GM23248 (cell line): ENCODE measurements at regions of chr20 and their contacts with region 1.

Region 1: GRCh38 chr20:44460795-44461141 is 14.9 kb upstream of the TTPAL start:
- DNase-seq: peak; percentile 72
- H3K4me3 ChIP-seq: no peak overlapping the region
- H3K27ac ChIP-seq: no peak overlapping the region
- H3K4me1 ChIP-seq: no peaks in the 10 kb centered on the region
- H3K27me3 ChIP-seq: no peaks in the 10 kb centered on the region; the same call in 1 of the 2 replicates

Region 2: GRCh38 chr20:44109951-44110361 is 350.8 kb before region 1 on chr20:
- in situ Hi-C with region 1: loop called (anchors 10 kb)
- DNase-seq: no peak
- H3K4me3 ChIP-seq: no peak overlapping the region
- H3K27ac ChIP-seq: no peak overlapping the region
- H3K4me1 ChIP-seq: no peaks in the 10 kb centered on the region
- H3K27me3 ChIP-seq: no peaks in the 10 kb centered on the region

Region 3: DNA sequence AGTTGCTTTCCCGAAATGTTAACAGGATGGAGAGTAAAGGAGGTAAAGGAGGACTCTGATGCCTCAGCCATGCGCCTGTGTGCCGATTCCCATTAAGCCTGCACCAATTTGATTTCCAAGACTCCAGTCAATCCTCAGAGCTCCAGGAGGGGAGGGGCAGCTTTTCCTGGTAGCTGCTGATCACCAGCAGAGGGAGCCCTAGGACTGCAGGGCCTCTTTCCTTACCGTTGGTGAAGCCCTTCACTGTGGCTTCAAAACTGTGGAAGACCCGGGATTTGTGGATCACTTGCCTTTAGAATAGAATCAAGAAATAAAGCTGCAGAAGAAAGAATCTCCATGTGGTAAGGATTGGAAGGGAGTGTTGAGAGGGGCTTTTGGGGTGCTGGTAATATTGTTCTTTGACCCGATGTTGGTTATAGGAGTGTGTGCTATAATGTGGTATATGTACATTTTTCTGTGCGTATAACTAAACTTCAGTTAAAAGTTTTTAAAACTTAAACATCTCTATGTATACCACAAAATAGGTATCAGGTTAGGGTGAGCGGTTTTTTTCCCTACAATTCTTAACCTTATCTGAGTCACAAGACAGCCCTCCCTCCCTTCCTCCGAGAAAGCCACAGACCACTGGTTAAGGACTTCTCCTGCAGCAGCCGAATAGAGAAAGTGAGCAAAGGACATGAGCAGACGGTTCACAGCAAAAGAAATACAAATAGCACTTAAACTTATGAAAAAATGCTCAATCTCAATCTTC is 243.3 kb before region 1 on chr20:
- in situ Hi-C with region 1: loop called (anchors 5 kb)
- DNase-seq: peak; percentile 80
- H3K4me3 ChIP-seq: no peak overlapping the region
- H3K27ac ChIP-seq: no peak overlapping the region
- H3K4me1 ChIP-seq: no peaks in the 10 kb centered on the region
- H3K27me3 ChIP-seq: no peaks in the 10 kb centered on the region

Region 4: DNA sequence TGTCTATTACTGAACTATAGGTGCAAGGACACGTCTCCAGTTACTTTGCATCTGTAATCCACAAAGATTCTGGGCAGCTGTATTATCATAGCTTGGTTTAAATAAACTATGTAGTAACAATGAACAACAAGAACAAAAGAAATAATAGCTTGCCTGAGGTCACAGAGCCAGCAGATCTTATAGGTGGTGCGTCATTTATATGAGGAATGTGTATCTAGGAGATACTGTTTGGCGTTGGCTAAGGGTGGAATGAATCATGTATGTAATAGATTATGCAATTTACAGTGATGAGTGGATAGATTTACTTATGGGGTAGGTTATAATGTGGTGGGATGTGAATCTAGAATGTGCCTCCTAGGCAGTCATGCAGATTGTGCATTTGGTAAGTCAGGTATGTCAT is 62.5 kb before region 1 on chr20:
- in situ Hi-C with region 1: loop called (anchors 5 kb)
- DNase-seq: peak; percentile 91
- H3K4me3 ChIP-seq: no peak overlapping the region
- H3K27ac ChIP-seq: no peak overlapping the region
- H3K4me1 ChIP-seq: peaks cover 8% of the 10 kb centered on the region; the same call in 1 of the 2 replicates
- H3K27me3 ChIP-seq: peaks cover 7% of the 10 kb centered on the region